CD4-positive, alpha-beta T cell (primary cell): ENCODE measurements at regions of chr12 and their contacts with region 1.

Region 1: DNA sequence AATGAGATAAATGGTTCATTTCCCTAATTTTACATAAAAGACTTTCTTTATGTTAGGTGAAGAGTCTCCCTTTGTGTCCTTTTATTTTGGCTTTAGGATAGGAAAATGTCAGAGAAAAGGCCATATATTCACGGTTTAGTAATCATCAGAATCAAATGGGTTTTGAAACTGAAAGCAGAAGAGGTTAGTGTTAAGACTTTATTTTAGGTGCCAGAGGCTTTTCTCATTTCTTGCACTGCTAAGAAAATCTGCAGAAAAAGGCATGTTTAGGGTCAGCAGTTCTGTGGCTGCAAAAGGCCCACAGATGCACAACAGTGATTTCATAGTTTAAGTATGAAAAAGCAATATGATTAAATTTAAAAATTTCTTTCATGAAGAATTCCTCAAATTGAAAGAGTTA is 80.4 kb upstream of the SINHCAF start:
- DNase-seq: no peak
- ATAC-seq: no peak
- H3K4me3 ChIP-seq: no peak overlapping the region
- H3K4me3 Mint-ChIP-seq: no peak overlapping the region
- H3K27ac ChIP-seq: no peak overlapping the region
- H3K27ac Mint-ChIP-seq: no peak overlapping the region
- H3K4me1 ChIP-seq: no peaks in the 10 kb centered on the region
- H3K4me1 Mint-ChIP-seq: no peaks in the 10 kb centered on the region
- H3K27me3 ChIP-seq: no peaks in the 10 kb centered on the region
- H3K27me3 Mint-ChIP-seq: peaks cover 7% of the 10 kb centered on the region
- CTCF ChIP-seq: no peak

Region 2: GRCh38 chr12:30514666-30515065 is 891.7 kb before region 1 on chr12:
- CTCF ChIA-PET with region 1: no interaction called
- POLR2A ChIA-PET with region 1: no interaction called
- intact Hi-C with region 1: no loop called
- DNase-seq: no peak
- ATAC-seq: no peak
- H3K4me3 ChIP-seq: no peak overlapping the region
- H3K4me3 Mint-ChIP-seq: no peak overlapping the region
- H3K27ac ChIP-seq: no peak overlapping the region
- H3K27ac Mint-ChIP-seq: no peak overlapping the region
- H3K4me1 ChIP-seq: no peaks in the 10 kb centered on the region
- H3K4me1 Mint-ChIP-seq: no peaks in the 10 kb centered on the region
- H3K27me3 ChIP-seq: no peaks in the 10 kb centered on the region
- H3K27me3 Mint-ChIP-seq: no peaks in the 10 kb centered on the region
- CTCF ChIP-seq: no peak

Region 3: GRCh38 chr12:31459984-31460383 is 53.6 kb after region 1 on chr12:
- CTCF ChIA-PET with region 1: no interaction called
- POLR2A ChIA-PET with region 1: no interaction called
- intact Hi-C with region 1: no loop called
- DNase-seq: no peak
- ATAC-seq: no peak
- H3K4me3 ChIP-seq: no peak overlapping the region
- H3K4me3 Mint-ChIP-seq: no peak overlapping the region
- H3K27ac ChIP-seq: no peak overlapping the region
- H3K27ac Mint-ChIP-seq: no peak overlapping the region
- H3K4me1 ChIP-seq: no peaks in the 10 kb centered on the region
- H3K4me1 Mint-ChIP-seq: no peaks in the 10 kb centered on the region
- H3K27me3 ChIP-seq: no peaks in the 10 kb centered on the region
- H3K27me3 Mint-ChIP-seq: no peaks in the 10 kb centered on the region
- CTCF ChIP-seq: no peak

Region 4: GRCh38 chr12:31631784-31632183 is 225.4 kb after region 1 on chr12:
- CTCF ChIA-PET with region 1: no interaction called
- POLR2A ChIA-PET with region 1: no interaction called
- intact Hi-C with region 1: loop called (anchors 1 kb)
- DNase-seq: peak in 2 of 14 experiments; percentile 19 to 21
- ATAC-seq: no peak
- H3K4me3 ChIP-seq: no peak overlapping the region
- H3K4me3 Mint-ChIP-seq: no peak overlapping the region
- H3K27ac ChIP-seq: no peak overlapping the region
- H3K27ac Mint-ChIP-seq: no peak overlapping the region
- H3K4me1 ChIP-seq: peaks cover 2% of the 10 kb centered on the region
- H3K4me1 Mint-ChIP-seq: peaks cover 6% of the 10 kb centered on the region
- H3K27me3 ChIP-seq: no peaks in the 10 kb centered on the region
- H3K27me3 Mint-ChIP-seq: peaks cover 4% of the 10 kb centered on the region
- CTCF ChIP-seq: no peak

Region 5: DNA sequence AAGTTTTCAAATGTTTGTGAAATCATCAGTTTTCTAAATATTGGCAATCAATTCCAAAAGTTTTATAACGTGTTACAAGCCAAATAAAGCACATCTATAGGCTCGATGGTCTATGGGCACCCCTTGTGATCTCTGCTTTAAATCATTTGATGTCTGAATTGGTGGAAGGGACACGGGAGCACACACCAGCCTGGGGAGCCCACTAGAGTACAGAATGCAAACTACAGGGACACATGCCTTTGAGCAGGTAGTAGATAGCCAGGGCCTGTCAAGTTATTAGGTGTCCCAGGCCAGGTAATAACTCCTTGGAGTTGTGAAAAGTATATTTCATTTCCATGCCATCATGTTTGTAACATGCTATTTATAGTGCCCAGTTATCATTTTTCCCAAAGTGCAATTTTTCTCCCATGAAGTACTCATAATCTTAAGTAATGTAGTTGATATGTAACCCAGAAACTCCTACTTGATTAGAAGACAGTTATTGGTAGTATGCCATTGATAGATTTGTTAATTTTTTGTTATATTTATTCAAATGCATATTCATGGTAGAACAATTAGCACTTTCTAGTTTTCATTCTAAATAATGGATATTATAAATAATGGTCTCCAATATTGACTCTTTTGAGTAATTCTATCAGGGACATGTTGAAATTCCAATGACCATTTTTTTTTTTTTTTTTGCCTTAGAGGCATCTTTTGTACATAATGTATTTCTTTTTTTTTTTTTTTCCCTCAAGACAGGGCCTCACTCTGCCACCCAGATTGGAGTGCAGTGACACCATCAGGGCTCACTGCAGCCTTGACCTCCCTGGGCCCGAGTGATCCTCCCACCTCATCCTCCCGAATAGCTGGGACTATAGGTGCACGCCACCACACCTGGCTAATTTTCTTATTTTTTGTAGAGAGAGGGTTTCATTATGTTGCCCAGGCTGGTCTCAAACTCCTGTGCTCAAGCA is 896.2 kb after region 1 on chr12:
- CTCF ChIA-PET with region 1: no interaction called
- POLR2A ChIA-PET with region 1: no interaction called
- intact Hi-C with region 1: loop called (anchors 2 kb)
- DNase-seq: peak in 5 of 14 experiments; percentile 3 to 51 (median 11)
- ATAC-seq: no peak
- H3K4me3 ChIP-seq: no peak overlapping the region
- H3K4me3 Mint-ChIP-seq: no peak overlapping the region
- H3K27ac ChIP-seq: no peak overlapping the region
- H3K27ac Mint-ChIP-seq: no peak overlapping the region
- H3K4me1 ChIP-seq: no peaks in the 10 kb centered on the region
- H3K4me1 Mint-ChIP-seq: peaks cover 10% of the 10 kb centered on the region
- H3K27me3 ChIP-seq: no peaks in the 10 kb centered on the region
- H3K27me3 Mint-ChIP-seq: no peaks in the 10 kb centered on the region
- CTCF ChIP-seq: peak; percentile 31

Region 6: DNA sequence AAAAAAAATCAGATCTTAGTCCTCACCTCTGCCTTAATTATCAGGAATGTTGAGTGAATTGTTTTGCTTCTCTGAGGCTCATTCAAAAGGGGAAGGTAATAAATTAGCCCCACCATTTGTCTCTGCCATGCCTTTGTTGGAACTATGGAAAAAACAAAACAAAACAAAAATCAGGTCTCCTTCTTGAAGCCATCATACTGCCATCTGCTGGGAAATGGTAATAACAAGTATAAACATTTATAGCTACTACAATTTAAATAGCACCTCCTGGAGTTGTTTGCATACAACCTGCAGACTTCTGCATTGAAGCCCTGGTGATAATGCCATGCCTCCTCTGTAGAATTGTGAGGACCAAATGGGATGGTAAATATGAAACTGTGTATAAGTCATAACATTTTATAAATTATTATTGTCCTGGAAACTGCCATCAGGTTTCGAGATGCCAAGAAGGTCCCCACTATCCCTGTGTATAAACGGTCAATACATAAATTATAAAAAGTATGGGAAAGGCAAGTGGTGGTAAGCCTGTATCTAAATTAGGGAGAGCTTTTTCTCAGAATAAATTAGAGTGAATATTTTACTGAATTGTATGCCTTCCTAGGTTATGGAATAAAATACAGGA is 905.8 kb after region 1 on chr12:
- CTCF ChIA-PET with region 1: no interaction called
- POLR2A ChIA-PET with region 1: no interaction called
- intact Hi-C with region 1: loop called (anchors 1 to 2 kb)
- DNase-seq: peak in 4 of 14 experiments; percentile 4 to 69 (median 64)
- ATAC-seq: peak; percentile 55
- H3K4me3 ChIP-seq: no peak overlapping the region
- H3K4me3 Mint-ChIP-seq: no peak overlapping the region
- H3K27ac ChIP-seq: no peak overlapping the region
- H3K27ac Mint-ChIP-seq: no peak overlapping the region
- H3K4me1 ChIP-seq: no peaks in the 10 kb centered on the region
- H3K4me1 Mint-ChIP-seq: peaks cover 6% of the 10 kb centered on the region
- H3K27me3 ChIP-seq: no peaks in the 10 kb centered on the region
- H3K27me3 Mint-ChIP-seq: no peaks in the 10 kb centered on the region
- CTCF ChIP-seq: peak; percentile 78